Left ventricle myocardium superior (tissue), 1 donor: ENCODE measurements at regions of chr22 and their contacts with region 1.

Region 1: GRCh38 chr22:46425016-46425415 is 89.5 kb downstream of the TRMU start:
- DNase-seq: no peak
- ATAC-seq: no peak

Region 2: GRCh38 chr22:46528121-46528610 is 103.2 kb after region 1 on chr22:
- intact Hi-C with region 1: loop called (anchors 10 kb)
- DNase-seq: no peak
- ATAC-seq: no peak

Region 3: GRCh38 chr22:46592390-46592872 is 167.4 kb after region 1 on chr22:
- intact Hi-C with region 1: no loop called
- DNase-seq: peak; percentile 75
- ATAC-seq: no peak